Naive thymus-derived CD4-positive, alpha-beta T cell (primary cell): ENCODE measurements at regions of chr9 and their contacts with region 1.

Region 1: GRCh38 chr9:20043035-20043434 is 254.2 kb upstream of the SLC24A2 start:
- DNase-seq: peak in 6 of 9 donors; percentile 6 to 46 (median 34)
- ATAC-seq: peak; percentile 59
- H3K4me3 ChIP-seq: peak overlapping the region; percentile 28
- H3K4me3 Mint-ChIP-seq: peak overlapping the region; percentile 61 to 85 (median 80)
- H3K27ac ChIP-seq: peak overlapping the region; percentile 17
- H3K27ac Mint-ChIP-seq: peak overlapping the region; percentile 84 to 95 (median 91)
- H3K4me1 ChIP-seq: peaks cover 0 to 12% of the 10 kb centered on the region in 2 donors
- H3K4me1 Mint-ChIP-seq: peaks cover 9 to 43% (median 27%) of the 10 kb centered on the region in 7 donors
- H3K27me3 ChIP-seq: no peaks in the 10 kb centered on the region
- H3K27me3 Mint-ChIP-seq: no peaks in the 10 kb centered on the region

Region 2: DNA sequence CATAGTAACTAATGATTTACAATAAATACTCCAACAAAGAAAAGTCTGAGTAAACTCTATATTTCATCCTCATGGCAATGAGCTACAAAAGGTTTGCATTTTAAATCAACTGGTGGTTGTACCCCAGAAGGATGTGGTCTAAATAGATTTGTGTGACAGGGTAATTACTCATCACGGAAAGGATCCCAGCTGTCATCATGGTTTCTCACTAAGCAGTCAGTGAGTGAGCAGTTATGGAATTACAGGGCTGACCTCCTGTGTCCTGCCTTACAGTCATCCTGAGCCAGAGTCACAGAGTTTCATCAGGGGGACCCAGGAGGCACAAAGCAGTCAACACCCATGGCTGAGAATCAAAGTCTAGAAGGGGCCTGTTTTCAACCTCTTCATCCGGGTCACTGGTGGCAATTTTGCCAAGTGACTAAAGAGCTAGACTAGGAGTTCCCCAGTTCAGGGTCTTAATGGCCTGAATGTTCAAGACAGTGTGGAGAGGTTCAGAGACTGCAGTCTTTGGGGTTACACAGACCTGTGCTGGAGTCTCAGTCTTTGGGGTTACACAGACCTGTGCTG is 43.5 kb before region 1 on chr9:
- CTCF ChIA-PET with region 1: no interaction called
- POLR2A ChIA-PET with region 1: no interaction called
- intact Hi-C with region 1: loop called in 1 of 2 experiments (anchors 2 kb)
- DNase-seq: peak in 1 of 9 donors; percentile 61
- ATAC-seq: peak; percentile 37
- H3K4me3 ChIP-seq: no peak overlapping the region
- H3K4me3 Mint-ChIP-seq: peak overlapping the region in 1 of 10 donors; percentile 59
- H3K27ac ChIP-seq: no peak overlapping the region
- H3K27ac Mint-ChIP-seq: peak overlapping the region in 3 of 9 donors; percentile 30 to 93 (median 39)
- H3K4me1 ChIP-seq: peaks cover 0 to 11% of the 10 kb centered on the region in 2 donors
- H3K4me1 Mint-ChIP-seq: peaks cover 0 to 51% (median 8%) of the 10 kb centered on the region in 7 donors
- H3K27me3 ChIP-seq: no peaks in the 10 kb centered on the region
- H3K27me3 Mint-ChIP-seq: no peaks in the 10 kb centered on the region

Region 3: GRCh38 chr9:20271096-20271495 is 228.1 kb after region 1 on chr9:
- CTCF ChIA-PET with region 1: no interaction called
- POLR2A ChIA-PET with region 1: no interaction called
- intact Hi-C with region 1: loop called in 1 of 2 experiments (anchors 10 kb)
- DNase-seq: peak in 5 of 9 donors; percentile 9 to 34 (median 25)
- ATAC-seq: no peak
- H3K4me3 ChIP-seq: no peak overlapping the region
- H3K4me3 Mint-ChIP-seq: no peak overlapping the region
- H3K27ac ChIP-seq: no peak overlapping the region
- H3K27ac Mint-ChIP-seq: peak overlapping the region in 5 of 9 donors; percentile 0 to 42 (median 12)
- H3K4me1 ChIP-seq: no peaks in the 10 kb centered on the region
- H3K4me1 Mint-ChIP-seq: peaks cover 7 to 35% (median 12%) of the 10 kb centered on the region in 7 donors
- H3K27me3 ChIP-seq: no peaks in the 10 kb centered on the region
- H3K27me3 Mint-ChIP-seq: no peaks in the 10 kb centered on the region

Region 4: DNA sequence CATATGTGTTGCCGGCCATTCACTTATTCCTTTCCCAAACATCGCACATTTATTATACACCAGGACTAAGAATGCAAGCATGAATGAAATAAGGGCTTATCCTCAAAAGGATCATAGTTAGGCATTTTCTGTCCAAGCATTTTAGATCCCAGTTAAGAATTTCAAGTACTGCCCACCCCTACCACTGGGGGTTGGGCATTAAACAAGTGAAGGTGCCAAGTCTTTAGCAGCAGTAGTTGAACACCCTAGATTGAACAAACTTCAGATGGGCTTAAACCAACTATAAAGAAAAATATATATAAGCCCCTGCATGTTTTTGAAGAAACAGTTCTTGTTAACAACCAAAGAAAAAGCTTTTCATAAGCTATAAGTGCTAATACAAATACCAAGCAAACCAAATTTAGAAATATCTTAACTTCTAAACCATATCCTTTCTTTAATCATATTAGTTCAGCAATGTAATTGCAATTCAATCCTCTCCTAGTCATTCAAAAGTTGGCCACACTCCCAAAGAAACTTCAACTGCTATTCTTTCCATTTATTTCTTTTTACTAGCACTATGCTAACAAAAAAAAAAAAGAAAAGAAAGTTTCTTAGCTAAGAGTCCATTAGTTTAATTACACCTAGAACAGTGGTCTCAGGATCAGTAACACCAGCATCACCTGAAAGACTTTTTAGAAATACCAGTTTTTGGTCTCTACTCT is 429.5 kb after region 1 on chr9:
- CTCF ChIA-PET with region 1: no interaction called
- POLR2A ChIA-PET with region 1: no interaction called
- intact Hi-C with region 1: no loop called
- DNase-seq: no peak
- ATAC-seq: no peak
- H3K4me3 ChIP-seq: no peak overlapping the region
- H3K4me3 Mint-ChIP-seq: peak overlapping the region in 1 of 10 donors; percentile 19
- H3K27ac ChIP-seq: no peak overlapping the region
- H3K27ac Mint-ChIP-seq: no peak overlapping the region
- H3K4me1 ChIP-seq: peaks cover 0 to 8% of the 10 kb centered on the region in 2 donors
- H3K4me1 Mint-ChIP-seq: peaks cover 20 to 92% (median 85%) of the 10 kb centered on the region in 7 donors
- H3K27me3 ChIP-seq: no peaks in the 10 kb centered on the region
- H3K27me3 Mint-ChIP-seq: no peaks in the 10 kb centered on the region